CD4-positive, alpha-beta T cell (primary cell): ENCODE measurements at regions of chr12 and their contacts with region 1.

Region 1: DNA sequence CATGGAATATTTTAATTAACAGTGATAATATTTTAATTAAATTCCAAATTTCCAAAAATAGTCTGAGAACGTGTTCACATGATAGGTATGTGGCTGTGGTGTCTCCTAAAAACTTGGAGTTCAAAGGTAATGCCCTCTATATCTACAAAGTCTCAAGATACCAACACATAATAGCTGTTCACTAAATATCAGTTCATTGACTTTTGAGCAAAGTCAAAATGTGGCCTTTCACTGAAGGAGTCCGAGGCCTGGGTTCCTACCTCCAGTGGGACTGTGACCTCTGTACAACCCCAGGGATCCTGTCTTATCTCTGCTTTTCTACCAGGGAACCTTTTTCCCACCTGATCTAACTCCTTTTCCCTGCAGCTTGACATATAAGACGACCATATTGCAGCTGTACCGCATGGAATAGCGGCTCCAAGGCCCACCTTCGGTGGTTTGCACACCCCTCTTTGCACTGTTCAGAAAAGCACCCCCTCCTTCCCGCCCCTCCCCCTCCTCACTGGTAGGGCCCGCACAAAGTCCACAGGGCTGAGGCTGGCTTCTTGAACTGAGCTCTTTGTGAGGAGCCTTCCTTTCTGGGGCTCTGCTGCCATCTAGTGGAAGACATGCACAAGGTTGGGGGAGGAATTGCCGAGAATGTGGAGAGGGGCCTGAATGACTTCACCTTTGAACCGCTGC is 3.1 kb downstream of the CCND2 start:
- DNase-seq: peak; percentile 76 to 94 (median 84)
- ATAC-seq: peak; percentile 27
- H3K4me3 ChIP-seq: peak overlapping the region; percentile 95
- H3K4me3 Mint-ChIP-seq: peak overlapping the region; percentile 95
- H3K27ac ChIP-seq: peak overlapping the region; percentile 19 to 82
- H3K27ac Mint-ChIP-seq: peak overlapping the region; percentile 99
- H3K4me1 ChIP-seq: peaks cover 80% of the 10 kb centered on the region
- H3K4me1 Mint-ChIP-seq: peaks cover 71% of the 10 kb centered on the region
- H3K27me3 ChIP-seq: no peaks in the 10 kb centered on the region
- H3K27me3 Mint-ChIP-seq: no peaks in the 10 kb centered on the region
- CTCF ChIP-seq: peak; percentile 89

Region 2: DNA sequence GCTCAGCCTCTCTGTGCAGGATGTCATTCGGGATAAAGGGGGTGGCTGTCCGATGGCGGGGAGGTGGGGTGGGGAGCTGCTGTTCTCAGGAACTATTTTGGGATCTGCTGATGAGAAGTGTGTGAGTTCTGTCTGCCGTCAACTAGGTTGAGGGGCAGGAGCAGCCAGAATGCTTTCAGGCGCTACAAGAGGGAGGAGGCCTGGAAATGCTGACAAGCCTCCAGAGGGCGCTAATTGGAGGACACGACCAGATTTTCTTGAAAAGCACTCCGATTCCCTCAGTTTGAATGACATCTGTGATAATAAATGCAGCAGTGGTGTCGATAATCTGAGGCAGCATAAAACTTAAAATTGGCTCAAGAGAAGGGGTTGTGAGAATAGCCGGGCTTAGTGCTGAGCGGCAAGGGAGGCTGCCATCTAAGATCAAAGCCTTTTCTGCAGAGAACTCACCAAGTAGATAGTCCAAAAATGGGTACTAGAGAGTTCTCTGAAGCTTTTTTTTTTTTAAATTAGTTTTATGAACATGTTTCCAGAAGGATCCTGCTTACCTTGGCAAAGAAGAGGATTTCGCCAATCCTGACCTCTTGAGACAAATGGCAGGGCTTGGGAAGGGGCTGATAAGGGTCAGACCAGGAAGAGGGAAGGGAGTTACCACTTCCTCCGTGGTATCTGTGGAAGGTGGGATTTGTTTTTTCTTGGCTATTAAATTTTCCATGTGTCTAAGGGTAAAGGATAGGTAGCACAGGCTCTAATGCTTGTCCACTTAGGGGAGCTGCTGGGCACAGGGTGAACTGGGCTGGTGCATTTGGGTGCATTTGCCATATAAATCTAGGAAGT is 618.1 kb before region 1 on chr12:
- CTCF ChIA-PET with region 1: no interaction called
- POLR2A ChIA-PET with region 1: no interaction called
- intact Hi-C with region 1: loop called in 1 of 2 experiments (anchors 5 kb)
- DNase-seq: peak in 10 of 14 experiments; percentile 5 to 57 (median 20)
- ATAC-seq: no peak
- H3K4me3 ChIP-seq: no peak overlapping the region
- H3K4me3 Mint-ChIP-seq: no peak overlapping the region
- H3K27ac ChIP-seq: no peak overlapping the region
- H3K27ac Mint-ChIP-seq: no peak overlapping the region
- H3K4me1 ChIP-seq: no peaks in the 10 kb centered on the region
- H3K4me1 Mint-ChIP-seq: no peaks in the 10 kb centered on the region
- H3K27me3 ChIP-seq: no peaks in the 10 kb centered on the region
- H3K27me3 Mint-ChIP-seq: no peaks in the 10 kb centered on the region
- CTCF ChIP-seq: peak; percentile 53

Region 3: DNA sequence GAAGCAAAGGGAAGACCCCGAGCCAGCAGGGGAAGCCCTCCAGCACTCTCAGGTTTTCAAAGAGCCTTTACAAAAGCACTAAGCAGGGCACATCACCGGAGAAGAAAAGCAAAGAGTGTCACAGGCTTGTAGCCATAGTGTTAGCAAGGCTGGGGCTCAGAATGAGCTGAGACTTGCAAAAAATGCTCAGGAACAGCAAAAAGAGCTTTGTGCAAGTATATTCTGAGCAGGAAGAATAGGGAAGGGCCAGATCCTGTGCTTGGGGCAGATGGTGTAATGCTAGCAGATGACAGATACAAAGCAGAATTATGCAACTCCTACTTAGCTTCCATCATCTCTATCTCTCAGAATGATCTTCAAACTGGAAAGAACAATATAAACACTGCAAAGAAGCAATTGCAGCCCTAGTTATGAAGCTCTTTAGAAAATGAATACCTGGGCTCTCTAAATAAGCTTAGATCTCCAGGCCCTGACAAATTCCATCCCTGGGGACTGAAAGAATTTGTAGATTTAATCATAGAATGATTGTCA is 379.8 kb before region 1 on chr12:
- CTCF ChIA-PET with region 1: interaction called, 9 read pairs
- POLR2A ChIA-PET with region 1: interaction called, 14 read pairs
- intact Hi-C with region 1: no loop called
- DNase-seq: peak in 3 of 14 experiments; percentile 36 to 43 (median 42)
- ATAC-seq: peak; percentile 33
- H3K4me3 ChIP-seq: peak overlapping the region; percentile 33
- H3K4me3 Mint-ChIP-seq: peak overlapping the region; percentile 76
- H3K27ac ChIP-seq: peak overlapping the region; percentile 69 to 87
- H3K27ac Mint-ChIP-seq: no peak overlapping the region
- H3K4me1 ChIP-seq: peaks cover 78% of the 10 kb centered on the region
- H3K4me1 Mint-ChIP-seq: peaks cover 48% of the 10 kb centered on the region
- H3K27me3 ChIP-seq: no peaks in the 10 kb centered on the region
- H3K27me3 Mint-ChIP-seq: no peaks in the 10 kb centered on the region
- CTCF ChIP-seq: no peak

Region 4: GRCh38 chr12:3988519-3989448 is 287.9 kb before region 1 on chr12:
- CTCF ChIA-PET with region 1: interaction called, 8 read pairs
- POLR2A ChIA-PET with region 1: interaction called, 44 read pairs
- intact Hi-C with region 1: no loop called
- DNase-seq: peak in 8 of 14 experiments; percentile 9 to 63 (median 45)
- ATAC-seq: peak; percentile 94
- H3K4me3 ChIP-seq: peak overlapping the region; percentile 10
- H3K4me3 Mint-ChIP-seq: peak overlapping the region; percentile 52
- H3K27ac ChIP-seq: peak overlapping the region; percentile 43 to 55
- H3K27ac Mint-ChIP-seq: peak overlapping the region; percentile 84
- H3K4me1 ChIP-seq: peaks cover 22% of the 10 kb centered on the region
- H3K4me1 Mint-ChIP-seq: peaks cover 36% of the 10 kb centered on the region
- H3K27me3 ChIP-seq: no peaks in the 10 kb centered on the region
- H3K27me3 Mint-ChIP-seq: no peaks in the 10 kb centered on the region
- CTCF ChIP-seq: no peak

Region 5: DNA sequence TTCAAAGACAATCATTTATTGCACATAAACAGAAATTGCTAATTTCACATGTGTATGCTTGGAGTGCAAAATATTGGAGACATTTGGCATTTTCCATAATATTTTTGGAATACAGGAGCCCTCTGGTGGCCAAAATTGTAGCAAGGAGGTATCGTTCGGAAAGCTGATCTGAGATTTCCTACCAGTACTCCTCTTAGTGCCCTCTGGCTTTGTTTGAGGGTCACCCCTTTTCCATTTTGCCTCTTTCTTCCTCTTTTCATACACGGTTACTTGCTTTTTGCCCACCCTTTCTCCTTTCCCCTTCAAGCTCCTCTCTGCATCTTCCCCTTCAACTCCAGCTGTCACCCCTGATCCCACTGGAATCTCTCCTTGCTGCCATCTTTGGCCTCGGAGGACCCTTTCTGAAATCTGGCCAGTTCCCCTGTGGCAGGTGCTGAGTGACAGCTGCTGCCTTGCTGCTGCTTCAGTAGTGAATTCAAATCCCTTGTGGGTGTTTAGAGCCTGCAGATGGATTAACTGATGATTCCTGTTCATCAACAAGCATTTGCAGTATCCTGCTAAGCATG is 238.8 kb before region 1 on chr12:
- CTCF ChIA-PET with region 1: interaction called, 16 read pairs
- POLR2A ChIA-PET with region 1: interaction called, 15 read pairs
- intact Hi-C with region 1: loop called (anchors 2 to 5 kb)
- DNase-seq: peak in 5 of 14 experiments; percentile 18 to 61 (median 44)
- ATAC-seq: no peak
- H3K4me3 ChIP-seq: no peak overlapping the region
- H3K4me3 Mint-ChIP-seq: no peak overlapping the region
- H3K27ac ChIP-seq: no peak overlapping the region
- H3K27ac Mint-ChIP-seq: no peak overlapping the region
- H3K4me1 ChIP-seq: no peaks in the 10 kb centered on the region
- H3K4me1 Mint-ChIP-seq: peaks cover 4% of the 10 kb centered on the region
- H3K27me3 ChIP-seq: no peaks in the 10 kb centered on the region
- H3K27me3 Mint-ChIP-seq: no peaks in the 10 kb centered on the region
- CTCF ChIP-seq: peak; percentile 73

Region 6: GRCh38 chr12:4118017-4118510 is 158.6 kb before region 1 on chr12:
- CTCF ChIA-PET with region 1: interaction called, 11 read pairs
- POLR2A ChIA-PET with region 1: interaction called, 23 read pairs
- intact Hi-C with region 1: no loop called
- DNase-seq: peak in 4 of 14 experiments; percentile 25 to 74 (median 60)
- ATAC-seq: peak; percentile 66
- H3K4me3 ChIP-seq: no peak overlapping the region
- H3K4me3 Mint-ChIP-seq: peak overlapping the region; percentile 70
- H3K27ac ChIP-seq: no peak overlapping the region
- H3K27ac Mint-ChIP-seq: peak overlapping the region; percentile 43
- H3K4me1 ChIP-seq: peaks cover 48% of the 10 kb centered on the region
- H3K4me1 Mint-ChIP-seq: peaks cover 49% of the 10 kb centered on the region
- H3K27me3 ChIP-seq: no peaks in the 10 kb centered on the region
- H3K27me3 Mint-ChIP-seq: no peaks in the 10 kb centered on the region
- CTCF ChIP-seq: no peak

Region 7: DNA sequence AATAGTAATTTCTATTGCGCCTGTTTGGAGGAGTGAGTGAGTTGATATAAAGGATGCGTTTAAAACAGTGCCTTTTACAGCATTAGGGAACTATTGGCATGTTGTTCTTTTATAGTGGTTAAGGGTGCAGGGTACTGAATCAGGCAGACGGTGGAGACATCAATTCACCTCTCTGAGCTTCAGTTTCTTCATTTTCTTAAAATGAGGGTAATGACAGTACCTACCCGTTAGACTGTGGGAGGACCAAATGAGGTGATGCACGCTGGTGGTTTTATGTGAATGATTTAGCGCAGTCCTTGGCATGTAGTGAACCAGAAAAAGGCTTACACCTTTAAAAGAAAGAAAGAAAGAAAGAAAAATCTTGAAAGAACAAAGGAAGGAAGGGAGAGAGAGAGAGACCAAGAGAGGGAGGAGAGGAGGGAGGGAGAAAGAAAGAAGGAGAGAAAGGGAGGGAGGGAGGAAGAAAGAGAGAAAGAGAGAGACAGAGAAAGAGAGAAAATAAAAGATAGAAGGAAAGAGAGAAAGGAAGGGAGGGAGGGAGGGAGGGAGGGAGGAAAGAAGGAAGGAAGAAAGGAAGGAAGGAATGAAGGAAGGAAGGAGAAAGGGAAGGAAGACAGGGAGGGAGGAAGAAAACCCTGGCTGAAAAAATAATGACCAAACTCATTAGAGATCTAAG is 25.3 kb before region 1 on chr12:
- CTCF ChIA-PET with region 1: interaction called, 56 read pairs
- POLR2A ChIA-PET with region 1: interaction called, 27 read pairs
- intact Hi-C with region 1: loop called (anchors 1 kb)
- DNase-seq: peak in 7 of 14 experiments; percentile 16 to 73 (median 25)
- ATAC-seq: peak; percentile 99
- H3K4me3 ChIP-seq: no peak overlapping the region
- H3K4me3 Mint-ChIP-seq: no peak overlapping the region
- H3K27ac ChIP-seq: no peak overlapping the region
- H3K27ac Mint-ChIP-seq: no peak overlapping the region
- H3K4me1 ChIP-seq: peaks cover 4% of the 10 kb centered on the region
- H3K4me1 Mint-ChIP-seq: peaks cover 7% of the 10 kb centered on the region
- H3K27me3 ChIP-seq: no peaks in the 10 kb centered on the region
- H3K27me3 Mint-ChIP-seq: no peaks in the 10 kb centered on the region
- CTCF ChIP-seq: peak; percentile 33

Region 8: DNA sequence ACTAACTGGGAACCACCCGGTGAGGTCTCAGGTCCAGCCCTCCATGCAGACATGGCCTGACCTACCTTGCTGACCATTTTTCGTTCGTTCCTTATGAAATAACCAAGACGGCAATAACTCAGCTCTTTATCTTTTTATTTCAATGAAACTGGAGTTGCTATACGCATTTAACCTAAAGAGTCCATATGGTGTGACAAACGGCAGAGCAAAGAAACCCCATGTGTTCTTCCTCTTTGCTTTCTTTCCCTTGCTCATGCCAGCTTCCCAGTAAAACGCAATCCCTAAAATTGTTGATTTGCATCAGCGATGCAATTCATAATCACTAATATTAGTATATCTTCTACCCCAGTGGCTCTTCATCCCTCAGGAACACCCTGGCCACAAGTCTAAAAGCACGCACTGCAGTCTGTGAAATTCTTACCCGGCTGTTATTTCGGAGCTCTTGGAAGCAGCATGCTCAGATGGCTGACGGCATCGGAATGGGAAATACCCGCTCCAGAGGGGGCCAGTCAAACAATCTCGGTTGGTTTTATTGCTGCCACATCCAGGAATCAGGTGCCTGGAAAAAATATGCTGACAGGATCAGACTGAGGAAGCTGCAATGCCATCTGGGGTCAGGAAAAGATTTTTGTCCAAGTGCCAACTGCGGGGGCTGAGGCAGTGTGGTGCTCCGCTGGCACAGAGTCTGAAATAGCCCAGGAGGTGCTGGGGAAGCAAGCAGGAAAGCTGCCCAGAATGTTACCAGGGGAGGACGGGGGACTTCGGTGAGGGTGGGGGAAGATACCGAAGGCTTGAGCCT is 604.8 kb after region 1 on chr12:
- CTCF ChIA-PET with region 1: no interaction called
- POLR2A ChIA-PET with region 1: no interaction called
- intact Hi-C with region 1: no loop called
- DNase-seq: no peak
- ATAC-seq: no peak
- H3K4me3 ChIP-seq: no peak overlapping the region
- H3K4me3 Mint-ChIP-seq: no peak overlapping the region
- H3K27ac ChIP-seq: no peak overlapping the region
- H3K27ac Mint-ChIP-seq: no peak overlapping the region
- H3K4me1 ChIP-seq: no peaks in the 10 kb centered on the region
- H3K4me1 Mint-ChIP-seq: no peaks in the 10 kb centered on the region
- H3K27me3 ChIP-seq: peaks cover 6 to 18% of the 10 kb centered on the region in 2 experiments
- H3K27me3 Mint-ChIP-seq: peaks cover 63% of the 10 kb centered on the region
- CTCF ChIP-seq: no peak